ENCODE measurements at regions of chr2 and their contacts with region 1.

Region 1: GRCh38 chr2:38728694-38729093 is 22.5 kb downstream of the SRSF7 start:
- DNase-seq: no peak
- H3K4me3 Mint-ChIP-seq: no peak overlapping the region
- H3K27ac Mint-ChIP-seq: no peak overlapping the region
- H3K4me1 Mint-ChIP-seq: no peaks in the 10 kb centered on the region
- H3K27me3 Mint-ChIP-seq: no peaks in the 10 kb centered on the region
- CTCF ChIP-seq: no peak

Region 2: DNA sequence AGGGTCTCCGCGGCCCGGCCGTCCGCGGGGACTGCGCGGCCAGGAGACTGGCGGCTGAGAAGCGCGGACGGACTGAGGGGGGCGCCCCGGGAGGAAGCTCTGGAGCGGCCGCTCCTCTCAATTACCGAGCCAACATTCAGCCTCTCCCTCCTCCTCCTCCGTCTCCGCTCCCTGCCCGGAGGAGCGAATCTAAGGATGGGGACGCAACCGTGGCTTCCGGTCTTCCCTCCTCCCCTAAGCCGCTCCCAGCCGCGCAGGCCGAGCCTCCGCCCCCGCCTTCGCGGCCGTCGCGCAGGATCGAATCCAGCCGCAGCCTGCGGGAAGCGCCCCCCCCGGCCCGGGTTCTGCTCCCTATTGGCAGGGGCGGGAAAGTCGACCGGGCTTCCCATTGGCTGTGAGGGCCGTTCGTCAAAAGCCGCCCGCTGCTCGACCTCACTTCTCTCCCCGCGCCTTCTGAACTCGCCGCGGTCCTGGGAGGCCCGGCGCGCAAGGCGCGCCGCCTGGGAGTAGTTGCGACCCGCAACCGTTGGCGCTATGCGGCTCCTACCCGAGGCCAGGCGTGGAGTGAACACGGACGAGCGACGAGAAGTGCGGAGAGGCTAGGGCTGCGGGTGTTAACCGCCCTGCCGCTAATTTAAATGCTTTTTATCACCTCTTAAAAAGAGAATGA is 125.8 kb before region 1 on chr2 and contains the start of gene HNRNPLL:
- CTCF ChIA-PET with region 1: no interaction called
- intact Hi-C with region 1: loop called (anchors 2 kb)
- DNase-seq: peak; percentile 99
- H3K4me3 Mint-ChIP-seq: peak within 1 kb of the TSS; percentile 86
- H3K27ac Mint-ChIP-seq: peak within 1 kb of the TSS; percentile 75
- H3K4me1 Mint-ChIP-seq: peaks cover 29% of the 10 kb centered on the region
- H3K27me3 Mint-ChIP-seq: no peaks in the 10 kb centered on the region
- CTCF ChIP-seq: no peak
- total RNA-seq, gene HNRNPLL: 47.6 and 51.3 TPM in 2 replicates

Region 3: DNA sequence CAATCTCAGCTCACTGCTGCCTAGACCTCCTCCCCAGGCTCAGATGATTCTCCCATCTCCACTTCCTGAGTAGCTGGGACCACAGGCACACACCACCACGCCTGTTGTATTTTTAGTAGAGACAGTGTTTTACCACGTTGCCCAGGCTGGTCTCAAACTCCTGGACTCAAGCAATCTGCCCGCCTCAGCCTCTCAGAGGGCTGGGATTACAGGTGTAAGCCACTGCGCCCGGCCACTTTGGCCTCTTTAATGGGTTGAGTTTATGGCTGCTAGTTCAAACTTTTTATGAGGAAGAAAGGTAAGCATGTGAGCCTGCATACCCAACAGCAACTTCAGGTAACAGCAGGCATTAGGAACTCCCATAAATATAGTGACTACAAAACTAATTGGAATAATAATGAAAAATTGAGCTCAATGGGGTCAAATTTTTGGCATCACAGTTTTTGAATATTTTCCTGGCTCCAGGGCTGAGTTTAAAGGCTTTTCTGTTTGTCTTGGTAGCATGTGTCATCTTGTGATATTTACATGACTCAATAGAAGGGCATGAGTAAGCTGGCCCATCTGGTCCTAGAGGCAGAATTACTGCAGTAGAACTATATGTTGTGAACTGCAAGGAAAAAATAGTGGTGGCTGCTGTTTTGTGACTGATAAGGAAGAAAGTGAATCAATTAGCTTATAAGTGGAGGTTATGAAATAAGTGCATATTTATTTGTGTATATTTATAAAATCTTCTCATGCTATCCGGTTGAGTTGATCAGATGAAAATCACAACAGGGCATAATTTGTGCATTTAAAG is 38.0 kb before region 1 on chr2:
- CTCF ChIA-PET with region 1: no interaction called
- intact Hi-C with region 1: loop called (anchors 2 kb)
- DNase-seq: peak; percentile 46
- H3K4me3 Mint-ChIP-seq: no peak overlapping the region
- H3K27ac Mint-ChIP-seq: peak overlapping the region; percentile 43
- H3K4me1 Mint-ChIP-seq: peaks cover 38% of the 10 kb centered on the region
- H3K27me3 Mint-ChIP-seq: no peaks in the 10 kb centered on the region
- CTCF ChIP-seq: no peak

Region 4: GRCh38 chr2:38740851-38741731 is 12.4 kb after region 1 on chr2:
- CTCF ChIA-PET with region 1: interaction called, 5 read pairs
- intact Hi-C with region 1: loop called (anchors 1 kb)
- DNase-seq: no peak
- H3K4me3 Mint-ChIP-seq: no peak overlapping the region
- H3K27ac Mint-ChIP-seq: peak overlapping the region; percentile 20
- H3K4me1 Mint-ChIP-seq: peaks cover 9% of the 10 kb centered on the region
- H3K27me3 Mint-ChIP-seq: no peaks in the 10 kb centered on the region
- CTCF ChIP-seq: peak; percentile 63